Activated naive CD4-positive, alpha-beta T cell treated with anti-CD3 and anti-CD28 coated beads for 36 hours (primary cell): ENCODE measurements at regions of chr1 and their contacts with region 1.

Region 1: GRCh38 chr1:201221201-201221846 is 30.7 kb downstream of the IGFN1 start:
- DNase-seq: no peak
- H3K4me3 Mint-ChIP-seq: no peak overlapping the region
- H3K27ac Mint-ChIP-seq: no peak overlapping the region
- H3K4me1 Mint-ChIP-seq: no peaks in the 10 kb centered on the region
- H3K27me3 Mint-ChIP-seq: no peaks in the 10 kb centered on the region

Region 2: DNA sequence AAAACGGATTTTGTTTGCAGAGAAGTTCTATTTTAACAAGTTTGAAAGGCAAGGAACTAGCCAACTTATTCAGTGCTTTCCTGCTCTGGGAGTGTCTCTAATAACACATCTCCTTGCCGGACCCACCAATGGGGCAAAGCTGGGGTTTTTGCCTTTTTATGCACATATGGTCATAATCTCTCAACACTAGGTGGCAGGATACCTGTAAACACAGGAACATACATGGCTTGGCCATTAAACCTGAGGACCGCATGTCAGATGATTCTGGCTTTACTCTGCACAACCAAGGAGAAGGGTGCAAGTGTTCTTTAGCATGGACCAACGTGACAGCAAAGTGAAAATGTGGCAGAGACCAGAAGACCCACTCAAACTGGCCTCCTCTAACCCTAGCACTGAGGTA is 71.9 kb before region 1 on chr1:
- CTCF ChIA-PET with region 1: interaction called, 23 read pairs
- intact Hi-C with region 1: loop called (anchors 1 kb)
- DNase-seq: no peak
- H3K4me3 Mint-ChIP-seq: no peak overlapping the region
- H3K27ac Mint-ChIP-seq: no peak overlapping the region
- H3K4me1 Mint-ChIP-seq: peaks cover 13% of the 10 kb centered on the region
- H3K27me3 Mint-ChIP-seq: no peaks in the 10 kb centered on the region

Region 3: GRCh38 chr1:201154389-201155165 is 66.7 kb before region 1 on chr1 and contains the start of gene TMEM9:
- CTCF ChIA-PET with region 1: interaction called, 23 read pairs
- intact Hi-C with region 1: loop called (anchors 1 kb)
- DNase-seq: peak; percentile 99
- H3K4me3 Mint-ChIP-seq: peak within 1 kb of the TSS; percentile 80
- H3K27ac Mint-ChIP-seq: peak within 1 kb of the TSS; percentile 73
- H3K4me1 Mint-ChIP-seq: peaks cover 19% of the 10 kb centered on the region
- H3K27me3 Mint-ChIP-seq: no peaks in the 10 kb centered on the region
- total RNA-seq, gene TMEM9: 19.7 to 20.5 TPM